CD8-positive, alpha-beta T cell (primary cell): ENCODE measurements at regions of chr12 and their contacts with region 1.

Region 1: GRCh38 chr12:6965026-6965661 is 5.3 kb downstream of the PHB2 start:
- DNase-seq: peak; percentile 74 to 93 (median 88)
- ATAC-seq: peak; percentile 45
- H3K4me3 ChIP-seq: no peak overlapping the region
- H3K4me3 Mint-ChIP-seq: no peak overlapping the region
- H3K27ac ChIP-seq: peak overlapping the region; percentile 20 to 74
- H3K27ac Mint-ChIP-seq: peak overlapping the region; percentile 83
- H3K4me1 ChIP-seq: peaks cover 56% of the 10 kb centered on the region
- H3K4me1 Mint-ChIP-seq: peaks cover 54% of the 10 kb centered on the region
- H3K27me3 ChIP-seq: no peaks in the 10 kb centered on the region
- H3K27me3 Mint-ChIP-seq: no peaks in the 10 kb centered on the region
- CTCF ChIP-seq: peak; percentile 78

Region 2: DNA sequence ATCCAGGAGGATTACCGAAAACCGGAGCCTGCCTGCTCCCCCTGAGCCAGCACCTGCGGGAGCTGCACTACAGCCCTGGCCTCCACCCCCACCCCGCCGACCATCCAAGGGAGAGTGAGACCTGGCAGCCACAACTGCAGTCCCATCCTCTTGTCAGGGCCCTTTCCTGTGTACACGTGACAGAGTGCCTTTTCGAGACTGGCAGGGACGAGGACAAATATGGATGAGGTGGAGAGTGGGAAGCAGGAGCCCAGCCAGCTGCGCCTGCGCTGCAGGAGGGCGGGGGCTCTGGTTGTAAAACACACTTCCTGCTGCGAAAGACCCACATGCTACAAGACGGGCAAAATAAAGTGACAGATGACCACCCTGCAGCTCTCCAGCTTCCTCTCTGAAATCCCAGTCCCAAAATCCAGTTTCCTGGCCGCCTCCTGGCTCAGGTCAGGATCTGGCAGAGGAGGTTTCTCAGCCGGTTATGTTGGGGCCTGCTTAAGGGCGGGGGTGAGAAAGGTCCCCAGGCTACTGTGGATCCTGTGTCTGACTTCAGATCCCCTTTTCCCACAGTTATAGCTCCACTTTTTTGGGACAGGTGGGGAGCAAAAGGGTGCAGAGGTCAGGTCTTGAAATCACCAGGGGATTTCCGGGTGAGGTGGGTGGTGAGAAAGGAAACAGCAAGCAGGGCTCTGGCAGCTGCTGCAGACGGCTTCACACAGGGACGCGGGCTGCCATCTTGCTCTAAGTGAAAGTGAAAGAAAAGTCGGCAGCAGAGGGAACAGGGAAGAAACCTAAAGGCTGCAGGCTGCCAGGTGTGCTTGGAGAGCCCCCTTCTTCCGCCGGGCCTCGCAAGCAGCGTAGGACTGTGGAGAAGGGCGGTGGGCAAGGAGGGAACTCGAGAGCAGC is 513.5 kb before region 1 on chr12 and contains the start of gene TAPBPL:
- CTCF ChIA-PET with region 1: no interaction called
- POLR2A ChIA-PET with region 1: no interaction called
- intact Hi-C with region 1: loop called in 1 of 2 experiments (anchors 5 kb)
- DNase-seq: peak; percentile 50 to 96 (median 79)
- ATAC-seq: peak; percentile 88
- H3K4me3 ChIP-seq: peak within 1 kb of the TSS; percentile 68 to 82
- H3K4me3 Mint-ChIP-seq: peak within 1 kb of the TSS; percentile 99
- H3K27ac ChIP-seq: peak within 1 kb of the TSS; percentile 85 to 95
- H3K27ac Mint-ChIP-seq: peak within 1 kb of the TSS; percentile 99
- H3K4me1 ChIP-seq: peaks cover 63% of the 10 kb centered on the region
- H3K4me1 Mint-ChIP-seq: peaks cover 82% of the 10 kb centered on the region
- H3K27me3 ChIP-seq: no peaks in the 10 kb centered on the region
- H3K27me3 Mint-ChIP-seq: no peaks in the 10 kb centered on the region
- CTCF ChIP-seq: no peak
- total RNA-seq, gene TAPBPL: 11.8 to 12.2 TPM

Region 3: GRCh38 chr12:6904280-6905278 is 60.6 kb before region 1 on chr12 and contains the start of gene LRRC23:
- CTCF ChIA-PET with region 1: interaction called, 7 read pairs
- POLR2A ChIA-PET with region 1: no interaction called
- intact Hi-C with region 1: loop called in 1 of 2 experiments (anchors 1 kb)
- DNase-seq: peak; percentile 92 to 99 (median 97)
- ATAC-seq: peak; percentile 96
- H3K4me3 ChIP-seq: peak within 1 kb of the TSS; percentile 56 to 64
- H3K4me3 Mint-ChIP-seq: peak within 1 kb of the TSS; percentile 5
- H3K27ac ChIP-seq: peak within 1 kb of the TSS; percentile 86 to 88
- H3K27ac Mint-ChIP-seq: no peak within 1 kb of the TSS
- H3K4me1 ChIP-seq: peaks cover 15% of the 10 kb centered on the region
- H3K4me1 Mint-ChIP-seq: no peaks in the 10 kb centered on the region
- H3K27me3 ChIP-seq: no peaks in the 10 kb centered on the region
- H3K27me3 Mint-ChIP-seq: no peaks in the 10 kb centered on the region
- CTCF ChIP-seq: no peak
- total RNA-seq, gene LRRC23: 6.5 to 7.2 TPM

Region 4: DNA sequence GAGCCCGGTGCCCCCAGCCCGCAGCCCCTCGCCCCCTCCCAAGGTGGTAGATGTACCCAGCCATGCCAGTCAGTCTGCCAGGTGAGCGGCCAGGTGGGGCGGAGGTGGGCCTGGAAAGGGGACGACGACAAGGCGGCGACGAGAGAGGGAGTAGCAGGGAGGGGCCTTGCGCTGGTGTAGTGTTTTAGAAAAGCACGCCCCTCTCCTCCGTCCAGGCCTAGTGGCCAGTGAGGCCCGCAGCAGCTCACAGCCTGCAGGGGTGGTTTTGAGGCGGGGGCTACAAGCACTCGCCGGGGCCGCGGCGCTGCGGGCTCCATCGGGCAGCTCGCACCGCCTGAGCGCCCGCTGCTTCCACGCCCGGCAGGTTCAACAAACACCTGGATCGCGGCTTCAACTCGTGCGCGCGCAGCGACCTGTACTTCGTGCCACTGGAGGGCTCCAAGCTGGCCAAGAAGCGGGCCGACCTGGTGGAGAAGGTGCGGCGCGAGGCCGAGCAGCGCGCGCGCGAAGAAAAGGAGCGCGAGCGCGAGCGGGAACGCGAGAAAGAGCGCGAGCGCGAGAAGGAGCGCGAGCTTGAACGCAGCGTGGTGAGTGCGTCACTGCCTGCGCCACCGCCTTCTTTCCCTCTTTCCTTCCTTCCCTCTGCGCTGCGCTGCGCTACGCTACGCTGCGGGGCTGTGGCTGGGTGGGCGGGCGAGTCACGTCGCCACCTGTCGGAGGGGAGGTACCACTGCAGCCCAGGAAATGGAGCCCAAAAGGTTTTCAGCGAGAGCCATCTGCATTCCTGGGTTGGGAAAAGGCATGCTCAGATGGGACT is 27.5 kb before region 1 on chr12:
- CTCF ChIA-PET with region 1: interaction called, 531 read pairs
- POLR2A ChIA-PET with region 1: interaction called, 642 read pairs
- intact Hi-C with region 1: loop called (anchors 1 kb)
- DNase-seq: peak; percentile 84 to 99 (median 92)
- ATAC-seq: peak; percentile 91
- H3K4me3 ChIP-seq: peak overlapping the region; percentile 60 to 91
- H3K4me3 Mint-ChIP-seq: peak overlapping the region; percentile 83
- H3K27ac ChIP-seq: peak overlapping the region; percentile 89 to 91
- H3K27ac Mint-ChIP-seq: peak overlapping the region; percentile 96
- H3K4me1 ChIP-seq: peaks cover 25% of the 10 kb centered on the region
- H3K4me1 Mint-ChIP-seq: peaks cover 48% of the 10 kb centered on the region
- H3K27me3 ChIP-seq: no peaks in the 10 kb centered on the region
- H3K27me3 Mint-ChIP-seq: no peaks in the 10 kb centered on the region
- CTCF ChIP-seq: peak; percentile 90

Region 5: GRCh38 chr12:6953442-6954315 is 11.5 kb before region 1 on chr12:
- CTCF ChIA-PET with region 1: interaction called, 531 read pairs
- POLR2A ChIA-PET with region 1: interaction called, 642 read pairs
- intact Hi-C with region 1: loop called in 1 of 2 experiments (anchors 1 kb)
- DNase-seq: peak in 8 of 9 experiments; percentile 69 to 91 (median 82)
- ATAC-seq: peak; percentile 27
- H3K4me3 ChIP-seq: peak overlapping the region; percentile 93 to 95
- H3K4me3 Mint-ChIP-seq: peak overlapping the region; percentile 99
- H3K27ac ChIP-seq: peak overlapping the region; percentile 72 to 93
- H3K27ac Mint-ChIP-seq: peak overlapping the region; percentile 100
- H3K4me1 ChIP-seq: peaks cover 70% of the 10 kb centered on the region
- H3K4me1 Mint-ChIP-seq: peaks cover 81% of the 10 kb centered on the region
- H3K27me3 ChIP-seq: no peaks in the 10 kb centered on the region
- H3K27me3 Mint-ChIP-seq: no peaks in the 10 kb centered on the region
- CTCF ChIP-seq: no peak

Region 6: GRCh38 chr12:7092229-7092985 is 127.3 kb after region 1 on chr12 and contains the start of gene C1R:
- CTCF ChIA-PET with region 1: interaction called, 4 read pairs
- POLR2A ChIA-PET with region 1: no interaction called
- intact Hi-C with region 1: loop called in 1 of 2 experiments (anchors 5 kb)
- DNase-seq: peak; percentile 36 to 81 (median 72)
- ATAC-seq: peak; percentile 89
- H3K4me3 ChIP-seq: peak within 1 kb of the TSS; percentile 49 to 66
- H3K4me3 Mint-ChIP-seq: peak within 1 kb of the TSS; percentile 88
- H3K27ac ChIP-seq: no peak within 1 kb of the TSS
- H3K27ac Mint-ChIP-seq: peak within 1 kb of the TSS; percentile 29
- H3K4me1 ChIP-seq: peaks cover 14% of the 10 kb centered on the region
- H3K4me1 Mint-ChIP-seq: peaks cover 11% of the 10 kb centered on the region
- H3K27me3 ChIP-seq: no peaks in the 10 kb centered on the region
- H3K27me3 Mint-ChIP-seq: no peaks in the 10 kb centered on the region
- CTCF ChIP-seq: peak; percentile 82
- total RNA-seq, gene C1R: 3.8 TPM

Region 7: GRCh38 chr12:7188562-7189397 is 223.6 kb after region 1 on chr12:
- CTCF ChIA-PET with region 1: no interaction called
- POLR2A ChIA-PET with region 1: no interaction called
- intact Hi-C with region 1: loop called in 1 of 2 experiments (anchors 2 kb)
- DNase-seq: peak; percentile 36 to 76 (median 63)
- ATAC-seq: peak; percentile 32
- H3K4me3 ChIP-seq: peak overlapping the region; percentile 85 to 86
- H3K4me3 Mint-ChIP-seq: peak overlapping the region; percentile 95
- H3K27ac ChIP-seq: peak overlapping the region; percentile 66 to 90
- H3K27ac Mint-ChIP-seq: peak overlapping the region; percentile 97
- H3K4me1 ChIP-seq: peaks cover 26% of the 10 kb centered on the region
- H3K4me1 Mint-ChIP-seq: peaks cover 44% of the 10 kb centered on the region
- H3K27me3 ChIP-seq: no peaks in the 10 kb centered on the region
- H3K27me3 Mint-ChIP-seq: no peaks in the 10 kb centered on the region
- CTCF ChIP-seq: peak; percentile 63